ENCODE measurements at regions of chr12 and their contacts with region 1.

Region 1: GRCh38 chr12:29691141-29691854 is 92.4 kb downstream of the TMTC1 start:
- DNase-seq: no peak
- ATAC-seq: no peak
- H3K4me3 ChIP-seq: no peak overlapping the region
- H3K27ac ChIP-seq: no peak overlapping the region
- H3K4me1 ChIP-seq: no peaks in the 10 kb centered on the region
- H3K27me3 ChIP-seq: no peaks in the 10 kb centered on the region
- CTCF ChIP-seq: no peak

Region 2: GRCh38 chr12:29782285-29782870 is 91.1 kb after region 1 on chr12:
- intact Hi-C with region 1: no loop called
- DNase-seq: peak in 2 of 6 donors; percentile 3 to 14
- ATAC-seq: peak; percentile 38 to 62 (median 56)
- H3K4me3 ChIP-seq: peak overlapping the region; percentile 21 to 66 (median 46)
- H3K27ac ChIP-seq: peak overlapping the region in 2 of 4 donors; percentile 35 to 37
- H3K4me1 ChIP-seq: peaks cover 0 to 6% (median 4%) of the 10 kb centered on the region in 3 donors
- H3K27me3 ChIP-seq: peaks cover 0 to 20% (median 8%) of the 10 kb centered on the region in 4 donors
- CTCF ChIP-seq: no peak

Region 3: DNA sequence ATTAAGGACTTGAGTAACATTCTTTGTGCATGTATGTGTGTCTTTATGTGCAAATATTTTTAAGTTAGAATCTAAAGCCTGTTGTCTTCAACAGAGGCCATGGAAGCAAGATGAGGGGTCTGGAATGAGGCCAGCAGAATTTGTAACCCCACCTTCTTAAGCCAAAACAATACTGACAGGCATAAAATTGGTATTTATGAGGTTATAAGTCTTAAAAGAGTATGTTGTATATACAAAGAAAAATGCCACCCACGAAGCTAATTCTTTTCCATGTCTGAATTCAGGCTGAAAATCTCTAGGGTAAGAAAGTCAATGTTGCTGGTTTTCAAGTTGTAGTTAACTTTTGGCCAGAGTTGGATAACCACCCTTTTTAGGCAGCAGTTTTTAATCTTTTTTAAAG is 178.6 kb after region 1 on chr12:
- intact Hi-C with region 1: loop called in 1 of 3 experiments (anchors 10 kb)
- DNase-seq: no peak
- ATAC-seq: no peak
- H3K4me3 ChIP-seq: no peak overlapping the region
- H3K27ac ChIP-seq: no peak overlapping the region
- H3K4me1 ChIP-seq: no peaks in the 10 kb centered on the region
- H3K27me3 ChIP-seq: no peaks in the 10 kb centered on the region
- CTCF ChIP-seq: no peak

Region 4: DNA sequence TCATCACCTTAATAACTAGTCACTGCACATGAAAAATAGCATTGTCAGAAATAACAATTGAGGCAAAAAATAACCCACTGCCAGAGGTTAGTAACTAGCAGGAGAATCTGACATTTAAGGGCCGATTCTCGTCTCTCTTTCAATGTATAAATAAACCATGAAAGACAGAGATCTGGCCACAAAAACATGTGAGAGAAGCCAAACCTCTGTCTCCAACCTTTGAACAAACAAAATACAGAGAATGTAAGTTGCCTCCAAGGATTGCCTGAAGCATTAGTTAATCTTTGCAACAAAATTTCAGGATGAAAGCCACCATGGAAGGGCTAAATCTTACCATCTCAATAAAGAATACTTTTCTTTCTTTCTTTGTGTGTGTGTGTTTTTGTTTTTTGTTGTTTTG is 349.8 kb after region 1 on chr12:
- intact Hi-C with region 1: no loop called
- DNase-seq: no peak
- ATAC-seq: no peak
- H3K4me3 ChIP-seq: no peak overlapping the region
- H3K27ac ChIP-seq: no peak overlapping the region
- H3K4me1 ChIP-seq: no peaks in the 10 kb centered on the region
- H3K27me3 ChIP-seq: no peaks in the 10 kb centered on the region
- CTCF ChIP-seq: no peak

Measured in pancreas (tissue), 10 donors.